Panc1 (cell line): ENCODE measurements at regions of chr4 and their contacts with region 1.

Region 1: GRCh38 chr4:40231316-40231863 is 34.6 kb downstream of the RHOH start:
- DNase-seq: no peak
- ATAC-seq: no peak
- H3K4me3 ChIP-seq: no peak overlapping the region
- H3K27ac ChIP-seq: peak overlapping the region; percentile 39; the same call in 1 of the 2 replicates
- H3K4me1 ChIP-seq: no peaks in the 10 kb centered on the region
- H3K27me3 ChIP-seq: no peaks in the 10 kb centered on the region
- CTCF ChIP-seq: no peak

Region 2: DNA sequence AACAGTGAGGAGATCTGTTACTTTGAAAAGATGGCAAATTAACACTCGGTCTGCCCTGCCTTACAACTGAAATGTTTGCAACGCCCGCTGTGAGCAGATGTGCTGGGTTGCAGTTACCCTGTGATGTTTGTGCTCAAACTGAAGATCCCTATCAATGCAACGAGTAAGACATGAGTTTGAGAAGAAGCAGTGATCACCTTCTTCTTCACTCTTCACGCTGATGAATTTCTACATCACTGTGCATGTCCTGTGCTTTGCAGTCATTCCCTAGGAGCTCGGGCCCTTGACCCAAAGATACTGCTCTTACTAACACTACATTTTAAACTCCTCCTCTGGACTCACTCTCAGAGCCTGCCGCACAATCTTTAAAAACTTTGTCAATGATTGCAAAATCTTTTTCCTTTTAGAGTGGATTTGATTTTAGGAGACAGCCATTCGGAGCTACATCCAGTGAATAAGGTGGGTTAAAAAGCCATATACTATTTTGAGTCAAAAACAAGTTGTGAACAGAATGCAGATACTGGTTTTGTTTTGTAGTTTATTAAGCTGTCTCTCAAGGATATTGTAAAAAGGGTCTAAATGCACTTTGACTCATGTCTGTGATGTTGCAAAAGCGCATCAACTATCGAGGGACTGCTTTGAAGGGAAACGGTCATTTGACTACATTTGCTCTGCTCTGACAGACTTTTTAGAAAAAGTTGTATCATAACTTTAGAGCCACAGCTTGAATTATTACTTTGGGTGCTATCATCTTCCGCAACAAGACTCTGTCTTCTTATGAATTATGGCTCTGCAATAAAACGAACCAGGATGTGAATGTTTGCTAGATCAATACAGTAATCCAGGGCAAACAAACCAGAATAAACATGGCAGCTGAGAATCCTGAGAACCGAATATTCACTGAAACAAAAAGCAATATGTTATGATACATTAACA is 40.2 kb before region 1 on chr4:
- CTCF ChIA-PET with region 1: no interaction called
- POLR2A ChIA-PET with region 1: interaction called, 14 read pairs
- in situ Hi-C with region 1: no loop called
- intact Hi-C with region 1: no loop called
- DNase-seq: peak; percentile 39
- ATAC-seq: peak; percentile 76
- H3K4me3 ChIP-seq: peak overlapping the region; percentile 3 to 37; a peak in 3 of 4 replicates
- H3K27ac ChIP-seq: peak overlapping the region; percentile 89
- H3K4me1 ChIP-seq: peaks cover 47% of the 10 kb centered on the region
- H3K27me3 ChIP-seq: no peaks in the 10 kb centered on the region
- CTCF ChIP-seq: no peak

Region 3: GRCh38 chr4:40507977-40508376 is 276.6 kb after region 1 on chr4:
- CTCF ChIA-PET with region 1: no interaction called
- POLR2A ChIA-PET with region 1: no interaction called
- in situ Hi-C with region 1: no loop called
- intact Hi-C with region 1: no loop called
- DNase-seq: no peak
- ATAC-seq: no peak
- H3K4me3 ChIP-seq: no peak overlapping the region
- H3K27ac ChIP-seq: no peak overlapping the region
- H3K4me1 ChIP-seq: no peaks in the 10 kb centered on the region
- H3K27me3 ChIP-seq: no peaks in the 10 kb centered on the region
- CTCF ChIP-seq: peak; percentile 48; the same call in 1 of the 2 replicates

Region 4: GRCh38 chr4:40808926-40809457 is 577.6 kb after region 1 on chr4:
- CTCF ChIA-PET with region 1: no interaction called
- POLR2A ChIA-PET with region 1: interaction called, 11 read pairs
- in situ Hi-C with region 1: no loop called
- intact Hi-C with region 1: no loop called
- DNase-seq: no peak
- ATAC-seq: no peak
- H3K4me3 ChIP-seq: no peak overlapping the region
- H3K27ac ChIP-seq: no peak overlapping the region
- H3K4me1 ChIP-seq: no peaks in the 10 kb centered on the region
- H3K27me3 ChIP-seq: no peaks in the 10 kb centered on the region
- CTCF ChIP-seq: no peak